ENCODE measurements at regions of chr16 and their contacts with region 1.

Region 1: GRCh38 chr16:83952940-83953795 is at the start of gene OSGIN1:
- DNase-seq: peak; percentile 87 to 98
- H3K4me3 ChIP-seq: peak within 1 kb of the TSS; percentile 64 to 76
- H3K27ac ChIP-seq: peak within 1 kb of the TSS; percentile 89 to 94
- H3K4me1 ChIP-seq: peaks cover 8 to 22% of the 10 kb centered on the region in 2 donors
- H3K27me3 ChIP-seq: no peaks in the 10 kb centered on the region
- CTCF ChIP-seq: no peak
- total RNA-seq, gene OSGIN1: 7.8 TPM

Region 2: DNA sequence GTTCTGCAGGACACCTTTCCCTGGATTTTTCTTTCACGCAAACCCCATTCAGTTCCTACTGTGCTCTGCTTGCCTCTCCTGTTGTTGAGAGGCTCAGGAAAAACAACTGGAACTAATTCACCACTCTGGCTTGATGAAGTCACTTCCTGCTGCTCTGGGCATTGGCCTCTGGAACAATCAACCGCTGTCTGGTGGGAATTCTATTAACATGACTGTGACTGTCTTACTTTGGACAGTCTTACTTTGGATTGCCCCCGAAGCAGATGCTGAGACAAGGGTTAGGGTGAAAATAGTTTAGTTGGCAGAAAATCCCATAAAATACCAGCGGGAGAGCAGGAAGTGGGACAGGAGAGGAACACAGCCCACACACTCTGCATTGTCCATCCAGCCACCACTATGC is 235.4 kb before region 1 on chr16:
- intact Hi-C with region 1: loop called (anchors 10 kb)
- DNase-seq: no peak
- H3K4me3 ChIP-seq: no peak overlapping the region
- H3K27ac ChIP-seq: no peak overlapping the region
- H3K4me1 ChIP-seq: peaks cover 0 to 14% of the 10 kb centered on the region in 2 donors
- H3K27me3 ChIP-seq: no peaks in the 10 kb centered on the region
- CTCF ChIP-seq: no peak

Region 3: GRCh38 chr16:83926726-83927397 is 26.3 kb before region 1 on chr16:
- intact Hi-C with region 1: loop called (anchors 2 kb)
- DNase-seq: peak in 1 of 2 donors; percentile 83
- H3K4me3 ChIP-seq: peak overlapping the region in 1 of 2 donors; percentile 31
- H3K27ac ChIP-seq: no peak overlapping the region
- H3K4me1 ChIP-seq: peaks cover 0 to 6% of the 10 kb centered on the region in 2 donors
- H3K27me3 ChIP-seq: no peaks in the 10 kb centered on the region
- CTCF ChIP-seq: peak; percentile 81 to 98 (median 96)

Region 4: DNA sequence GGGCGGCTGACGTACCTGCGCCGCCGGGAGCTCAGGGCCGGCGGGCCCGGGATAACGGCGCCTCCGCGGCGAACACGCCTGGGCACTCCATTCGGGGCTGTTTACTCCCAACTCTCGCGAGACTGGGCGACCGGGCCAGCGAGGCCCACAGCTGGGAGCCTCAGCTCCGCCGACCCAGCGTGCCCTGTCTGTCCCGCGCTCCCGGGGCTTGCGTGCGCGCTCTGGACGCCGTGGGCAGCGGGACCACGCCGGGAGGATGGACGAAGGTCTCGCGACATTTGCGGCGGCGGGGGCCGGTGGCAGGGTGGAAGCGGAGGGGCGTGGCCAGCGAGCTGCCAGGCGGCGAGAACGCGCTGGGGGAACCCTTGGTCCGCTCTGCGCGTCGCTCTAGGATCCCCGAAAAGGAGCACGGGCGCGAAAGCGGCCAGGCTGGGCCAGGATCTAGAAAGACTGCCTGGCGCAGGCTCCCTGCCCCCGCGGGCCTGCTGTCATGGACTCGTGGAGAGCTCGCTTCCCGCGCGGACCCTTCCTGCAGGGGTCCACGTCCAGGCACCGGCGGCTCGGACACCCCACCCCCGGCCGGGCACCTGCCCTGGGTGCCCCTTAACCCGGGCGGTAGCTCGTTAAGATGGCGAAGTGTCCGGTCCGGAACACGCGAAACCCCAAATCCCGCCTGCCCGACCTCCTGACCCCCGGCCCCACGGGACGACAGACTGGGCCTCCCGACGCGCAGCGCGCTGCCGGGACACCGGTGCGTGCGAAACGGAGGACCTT is 163.7 kb after region 1 on chr16 and contains the start of gene MBTPS1:
- intact Hi-C with region 1: loop called (anchors 2 kb)
- DNase-seq: peak; percentile 89 to 99
- H3K4me3 ChIP-seq: peak within 1 kb of the TSS; percentile 84 to 90
- H3K27ac ChIP-seq: peak within 1 kb of the TSS; percentile 86 to 93
- H3K4me1 ChIP-seq: peaks cover 0 to 13% of the 10 kb centered on the region in 2 donors
- H3K27me3 ChIP-seq: no peaks in the 10 kb centered on the region
- CTCF ChIP-seq: no peak
- total RNA-seq, gene MBTPS1: 95.6 TPM

Region 5: GRCh38 chr16:84186685-84187437 is 233.7 kb after region 1 on chr16 and contains the start of gene TAF1C:
- intact Hi-C with region 1: loop called (anchors 2 kb)
- DNase-seq: peak; percentile 71 to 97
- H3K4me3 ChIP-seq: peak within 1 kb of the TSS; percentile 93 to 96
- H3K27ac ChIP-seq: peak within 1 kb of the TSS; percentile 67 to 82
- H3K4me1 ChIP-seq: peaks cover 5 to 10% of the 10 kb centered on the region in 2 donors
- H3K27me3 ChIP-seq: no peaks in the 10 kb centered on the region
- CTCF ChIP-seq: peak; percentile 89 to 99 (median 98)
- total RNA-seq, gene TAF1C: 151 TPM